OCI-LY7 (cell line): ENCODE measurements at regions of chr3 and their contacts with region 1.

Region 1: DNA sequence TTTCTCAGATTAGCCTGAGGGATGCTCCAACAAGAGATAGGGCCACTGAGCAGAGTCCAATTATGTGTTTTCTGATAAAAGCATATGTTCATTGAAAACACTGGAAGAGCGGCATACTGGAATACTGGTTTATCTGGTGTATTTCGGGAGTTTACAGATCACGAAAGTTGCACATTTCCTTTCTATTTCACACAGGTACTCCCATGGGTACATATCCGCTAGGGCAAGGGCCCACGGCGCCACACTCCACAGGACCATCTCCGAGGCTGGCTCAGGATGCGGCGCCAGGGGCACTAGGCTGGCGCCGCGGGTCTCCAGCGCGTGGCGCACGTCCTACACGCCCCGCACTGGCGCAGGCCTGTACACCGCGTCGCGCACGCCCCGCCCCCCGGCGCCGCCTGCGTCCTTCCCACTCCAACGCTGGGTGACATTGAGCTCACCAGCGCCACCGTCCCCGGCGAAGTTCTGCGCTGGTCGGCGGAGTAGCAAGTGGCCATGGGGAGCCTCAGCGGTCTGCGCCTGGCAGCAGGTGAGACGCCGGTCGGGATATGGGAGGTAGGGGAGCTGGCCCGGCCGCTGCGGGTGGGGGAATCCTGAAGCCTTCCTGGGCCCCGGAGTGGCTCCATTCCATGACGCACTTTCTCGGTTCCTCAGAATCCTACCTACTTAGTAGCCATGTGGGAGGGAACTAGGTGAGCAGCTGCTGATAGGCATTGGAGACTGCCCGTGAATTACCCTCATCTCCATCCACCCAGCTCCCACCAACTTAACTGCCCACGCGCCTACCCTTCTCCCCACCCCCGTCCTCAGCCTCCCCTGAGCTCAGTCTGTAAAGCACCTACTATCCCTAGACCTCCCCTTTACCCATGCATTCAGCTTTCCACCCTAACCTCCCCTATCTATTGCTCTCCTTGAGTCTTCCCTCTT is at the start of gene FAM162A:
- DNase-seq: peak; percentile 96
- H3K4me3 ChIP-seq: peak within 1 kb of the TSS; percentile 83
- H3K27ac ChIP-seq: peak within 1 kb of the TSS; percentile 74
- H3K4me1 ChIP-seq: peaks cover 47% of the 10 kb centered on the region
- CTCF ChIP-seq: peak; percentile 80
- total RNA-seq, gene FAM162A: 27.9 and 43.2 TPM in 2 replicates

Region 2: GRCh38 chr3:122365073-122365472 is 19.0 kb before region 1 on chr3:
- CTCF ChIA-PET with region 1: no interaction called
- POLR2A ChIA-PET with region 1: interaction called, 10 read pairs
- intact Hi-C with region 1: no loop called
- DNase-seq: no peak
- H3K4me3 ChIP-seq: no peak overlapping the region
- H3K27ac ChIP-seq: no peak overlapping the region
- H3K4me1 ChIP-seq: no peaks in the 10 kb centered on the region
- CTCF ChIP-seq: no peak

Region 3: DNA sequence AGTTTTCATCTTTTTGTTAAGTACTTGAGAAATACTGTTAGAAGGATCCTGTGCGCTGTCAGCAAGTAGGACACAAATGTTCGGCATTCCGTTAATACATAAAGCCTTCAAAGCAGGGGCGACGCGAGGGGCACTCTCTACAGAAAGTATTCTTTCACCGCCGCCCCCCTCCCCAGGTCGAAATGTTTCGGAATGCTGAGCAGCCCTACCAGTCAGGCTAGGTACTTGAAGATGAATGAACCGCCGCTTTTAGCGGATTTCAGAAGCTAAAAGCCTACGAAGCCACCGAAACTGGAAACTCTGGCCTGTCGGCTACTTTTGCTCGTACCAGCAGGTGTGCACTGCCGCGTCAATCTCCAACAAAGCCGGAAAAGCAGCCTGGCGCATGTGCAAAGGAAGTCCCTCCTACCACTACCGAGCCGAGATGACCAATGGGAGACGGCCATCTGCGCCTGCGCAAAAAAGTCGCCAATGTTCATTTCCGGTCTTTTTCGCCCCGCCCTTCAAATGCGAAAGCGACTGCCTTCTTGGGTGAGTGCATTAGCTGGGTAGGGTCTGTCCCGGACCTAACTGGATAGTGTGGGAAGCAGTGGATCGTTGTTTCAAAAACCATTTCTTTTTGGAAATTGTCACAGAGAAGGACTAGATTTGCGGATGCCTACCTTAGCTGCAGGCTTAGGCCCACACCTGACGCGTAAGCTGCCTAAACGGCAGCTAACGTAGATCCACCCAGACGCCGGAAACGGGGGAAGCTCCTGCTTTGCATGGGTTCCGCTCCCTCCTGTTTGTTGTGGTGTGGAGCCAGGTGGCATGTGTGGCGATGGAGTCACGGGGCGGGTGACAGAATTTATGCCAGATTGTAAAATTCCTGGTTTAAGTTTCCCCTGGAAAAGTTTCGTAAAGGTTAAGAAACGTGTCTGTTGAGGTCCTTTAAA is 32.0 kb after region 1 on chr3 and contains the start of gene WDR5B:
- CTCF ChIA-PET with region 1: interaction called, 3 read pairs
- POLR2A ChIA-PET with region 1: interaction called, 44 read pairs
- intact Hi-C with region 1: loop called (anchors 1 kb)
- DNase-seq: peak; percentile 98
- H3K4me3 ChIP-seq: peak within 1 kb of the TSS; percentile 85
- H3K27ac ChIP-seq: peak within 1 kb of the TSS; percentile 87
- H3K4me1 ChIP-seq: peaks cover 38% of the 10 kb centered on the region
- CTCF ChIP-seq: 0 out of 2 replicates have a peak, but pooled peaks have one; percentile 13
- total RNA-seq, gene WDR5B: 6.9 and 8.3 TPM in 2 replicates

Region 4: DNA sequence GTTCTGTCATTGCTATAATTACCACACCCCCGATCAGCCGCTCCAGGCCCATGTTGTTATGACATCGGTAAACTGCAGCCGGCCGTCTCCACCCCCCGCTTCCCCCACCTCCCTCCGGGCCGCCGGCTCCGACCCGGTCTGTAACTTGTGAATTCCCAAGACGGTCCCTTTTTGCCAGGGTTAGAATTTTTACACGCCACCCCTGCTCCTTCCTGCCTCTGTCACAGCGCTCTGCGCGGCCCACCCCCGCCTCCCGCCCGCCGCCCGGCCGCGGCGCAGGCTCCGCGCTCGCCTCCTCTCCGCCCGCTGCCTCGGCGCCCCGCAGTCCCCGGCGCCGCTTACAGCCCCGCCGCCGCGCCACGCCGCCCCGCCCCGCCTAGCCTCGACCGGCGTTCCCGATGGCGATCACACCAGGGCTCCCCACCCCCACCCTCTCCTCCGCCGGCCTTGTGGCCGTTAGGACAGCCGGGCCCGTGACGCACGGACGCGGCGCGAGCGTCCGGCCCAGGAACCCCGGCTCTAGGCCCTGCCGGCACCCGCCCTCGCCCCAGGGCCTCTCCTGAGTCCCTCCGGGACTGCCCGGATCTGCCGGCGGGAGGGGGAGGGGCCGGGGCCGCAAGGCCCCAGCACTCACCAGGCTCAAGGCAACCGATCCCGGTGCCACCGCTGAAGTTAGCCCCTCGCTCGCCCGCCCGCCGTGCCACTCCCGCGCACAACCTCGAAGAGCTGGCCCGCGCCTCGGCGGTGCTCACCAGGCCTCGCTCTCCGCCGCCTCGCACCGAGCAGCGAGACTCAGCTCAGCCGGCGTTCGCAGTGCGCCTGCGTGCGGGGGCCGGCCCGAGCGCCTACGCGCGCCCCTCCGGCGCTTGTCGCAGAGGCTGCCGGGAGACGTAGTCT is 130.3 kb after region 1 on chr3 and contains the start of gene KPNA1:
- CTCF ChIA-PET with region 1: interaction called, 3 read pairs
- POLR2A ChIA-PET with region 1: interaction called, 7 read pairs
- intact Hi-C with region 1: loop called (anchors 5 kb)
- DNase-seq: peak; percentile 93
- H3K4me3 ChIP-seq: peak within 1 kb of the TSS; percentile 75
- H3K27ac ChIP-seq: peak within 1 kb of the TSS; percentile 74
- H3K4me1 ChIP-seq: peaks cover 25% of the 10 kb centered on the region
- CTCF ChIP-seq: no peak
- total RNA-seq, gene KPNA1: 20.0 and 24.6 TPM in 2 replicates

Region 5: DNA sequence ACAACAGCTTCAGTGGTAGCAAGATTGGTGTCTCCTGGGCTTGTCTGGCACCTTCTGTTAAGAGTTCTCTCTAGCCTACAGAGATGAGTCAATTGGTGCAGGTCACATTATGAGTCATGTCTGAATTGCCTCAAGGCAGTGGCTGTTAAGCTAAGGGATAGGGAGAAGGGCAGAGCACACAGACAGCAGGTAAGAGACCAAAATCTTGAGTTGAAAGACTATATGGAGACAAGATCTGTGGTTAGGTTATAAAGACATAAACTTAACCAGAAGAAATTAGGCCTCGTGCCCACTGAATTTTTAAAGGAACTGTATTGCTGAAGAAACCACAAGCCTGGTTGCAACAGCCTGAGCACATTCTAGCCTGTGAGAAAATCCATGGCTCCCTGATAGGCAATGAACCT is 149.9 kb after region 1 on chr3:
- CTCF ChIA-PET with region 1: no interaction called
- POLR2A ChIA-PET with region 1: no interaction called
- intact Hi-C with region 1: no loop called
- DNase-seq: no peak
- H3K4me3 ChIP-seq: no peak overlapping the region
- H3K27ac ChIP-seq: no peak overlapping the region
- H3K4me1 ChIP-seq: no peaks in the 10 kb centered on the region
- CTCF ChIP-seq: no peak

Region 6: GRCh38 chr3:122890077-122890719 is 506.2 kb after region 1 on chr3:
- CTCF ChIA-PET with region 1: no interaction called
- POLR2A ChIA-PET with region 1: no interaction called
- intact Hi-C with region 1: no loop called
- DNase-seq: peak; percentile 13
- H3K4me3 ChIP-seq: no peak overlapping the region
- H3K27ac ChIP-seq: no peak overlapping the region
- H3K4me1 ChIP-seq: no peaks in the 10 kb centered on the region
- CTCF ChIP-seq: no peak

Region 7: GRCh38 chr3:123201566-123202427 is 817.8 kb after region 1 on chr3 and contains the start of gene SEC22A:
- CTCF ChIA-PET with region 1: no interaction called
- POLR2A ChIA-PET with region 1: no interaction called
- intact Hi-C with region 1: loop called (anchors 10 kb)
- DNase-seq: peak; percentile 97
- H3K4me3 ChIP-seq: peak within 1 kb of the TSS; percentile 93
- H3K27ac ChIP-seq: peak within 1 kb of the TSS; percentile 72
- H3K4me1 ChIP-seq: peaks cover 21% of the 10 kb centered on the region
- CTCF ChIP-seq: no peak
- total RNA-seq, gene SEC22A: 24.5 and 26.4 TPM in 2 replicates